ENCODE measurements at regions of chr13 and their contacts with region 1.

Region 1: GRCh38 chr13:97249093-97249795 is 27.1 kb downstream of the MBNL2 start:
- DNase-seq: no peak
- ATAC-seq: no peak
- H3K4me3 ChIP-seq: no peak overlapping the region
- H3K4me3 Mint-ChIP-seq: no peak overlapping the region
- H3K27ac ChIP-seq: no peak overlapping the region
- H3K27ac Mint-ChIP-seq: no peak overlapping the region
- H3K4me1 ChIP-seq: peaks cover 7 to 8% of the 10 kb centered on the region in 2 donors
- H3K4me1 Mint-ChIP-seq: peaks cover 2 to 38% (median 28%) of the 10 kb centered on the region in 7 donors
- H3K27me3 ChIP-seq: no peaks in the 10 kb centered on the region
- H3K27me3 Mint-ChIP-seq: no peaks in the 10 kb centered on the region

Region 2: GRCh38 chr13:97124916-97125809 is 124.1 kb before region 1 on chr13:
- CTCF ChIA-PET with region 1: no interaction called
- POLR2A ChIA-PET with region 1: no interaction called
- intact Hi-C with region 1: loop called in 1 of 2 experiments (anchors 5 kb)
- DNase-seq: no peak
- ATAC-seq: no peak
- H3K4me3 ChIP-seq: no peak overlapping the region
- H3K4me3 Mint-ChIP-seq: no peak overlapping the region
- H3K27ac ChIP-seq: no peak overlapping the region
- H3K27ac Mint-ChIP-seq: no peak overlapping the region
- H3K4me1 ChIP-seq: no peaks in the 10 kb centered on the region
- H3K4me1 Mint-ChIP-seq: peaks cover 0 to 13% (median 0%) of the 10 kb centered on the region in 7 donors
- H3K27me3 ChIP-seq: no peaks in the 10 kb centered on the region
- H3K27me3 Mint-ChIP-seq: peaks cover 15 to 33% (median 20%) of the 10 kb centered on the region in 5 donors